CD4-positive, alpha-beta memory T cell (primary cell): ENCODE measurements at regions of chr10 and their contacts with region 1.

Region 1: GRCh38 chr10:31031558-31032257 is at the start of gene ZNF438:
- DNase-seq: peak in 4 of 5 donors; percentile 96 to 98 (median 96)
- H3K4me3 ChIP-seq: peak within 1 kb of the TSS; percentile 77 to 96
- H3K4me3 Mint-ChIP-seq: peak within 1 kb of the TSS; percentile 86 to 93 (median 90)
- H3K27ac ChIP-seq: peak within 1 kb of the TSS; percentile 92
- H3K27ac Mint-ChIP-seq: peak within 1 kb of the TSS; percentile 98 to 99 (median 99)
- H3K4me1 ChIP-seq: peaks cover 13% of the 10 kb centered on the region
- H3K4me1 Mint-ChIP-seq: peaks cover 9 to 25% (median 15%) of the 10 kb centered on the region in 4 donors
- H3K27me3 ChIP-seq: no peaks in the 10 kb centered on the region
- H3K27me3 Mint-ChIP-seq: no peaks in the 10 kb centered on the region
- total RNA-seq, gene ZNF438: 3.7 to 4.1 TPM

Region 2: GRCh38 chr10:30433730-30434272 is 597.9 kb before region 1 on chr10 and contains the start of gene MAP3K8:
- CTCF ChIA-PET with region 1: no interaction called
- POLR2A ChIA-PET with region 1: no interaction called
- intact Hi-C with region 1: loop called (anchors 10 kb)
- DNase-seq: peak; percentile 75 to 89 (median 79)
- H3K4me3 ChIP-seq: peak within 1 kb of the TSS; percentile 55 to 75
- H3K4me3 Mint-ChIP-seq: peak within 1 kb of the TSS; percentile 83 to 94 (median 92)
- H3K27ac ChIP-seq: peak within 1 kb of the TSS; percentile 88
- H3K27ac Mint-ChIP-seq: peak within 1 kb of the TSS; percentile 70 to 94 (median 91)
- H3K4me1 ChIP-seq: peaks cover 51% of the 10 kb centered on the region
- H3K4me1 Mint-ChIP-seq: peaks cover 37 to 55% (median 45%) of the 10 kb centered on the region in 4 donors
- H3K27me3 ChIP-seq: no peaks in the 10 kb centered on the region
- H3K27me3 Mint-ChIP-seq: no peaks in the 10 kb centered on the region
- total RNA-seq, gene MAP3K8: 5.5 to 6.5 TPM

Region 3: GRCh38 chr10:30701451-30702173 is 330.1 kb before region 1 on chr10:
- CTCF ChIA-PET with region 1: no interaction called
- POLR2A ChIA-PET with region 1: interaction called, 3 read pairs
- intact Hi-C with region 1: loop called (anchors 10 kb)
- DNase-seq: peak; percentile 75 to 88 (median 78)
- H3K4me3 ChIP-seq: peak overlapping the region in 1 of 2 donors; percentile 28
- H3K4me3 Mint-ChIP-seq: peak overlapping the region; percentile 78 to 88 (median 84)
- H3K27ac ChIP-seq: peak overlapping the region; percentile 59
- H3K27ac Mint-ChIP-seq: peak overlapping the region; percentile 90 to 98 (median 95)
- H3K4me1 ChIP-seq: peaks cover 89% of the 10 kb centered on the region
- H3K4me1 Mint-ChIP-seq: peaks cover 53 to 90% (median 77%) of the 10 kb centered on the region in 4 donors
- H3K27me3 ChIP-seq: no peaks in the 10 kb centered on the region
- H3K27me3 Mint-ChIP-seq: no peaks in the 10 kb centered on the region

Region 4: DNA sequence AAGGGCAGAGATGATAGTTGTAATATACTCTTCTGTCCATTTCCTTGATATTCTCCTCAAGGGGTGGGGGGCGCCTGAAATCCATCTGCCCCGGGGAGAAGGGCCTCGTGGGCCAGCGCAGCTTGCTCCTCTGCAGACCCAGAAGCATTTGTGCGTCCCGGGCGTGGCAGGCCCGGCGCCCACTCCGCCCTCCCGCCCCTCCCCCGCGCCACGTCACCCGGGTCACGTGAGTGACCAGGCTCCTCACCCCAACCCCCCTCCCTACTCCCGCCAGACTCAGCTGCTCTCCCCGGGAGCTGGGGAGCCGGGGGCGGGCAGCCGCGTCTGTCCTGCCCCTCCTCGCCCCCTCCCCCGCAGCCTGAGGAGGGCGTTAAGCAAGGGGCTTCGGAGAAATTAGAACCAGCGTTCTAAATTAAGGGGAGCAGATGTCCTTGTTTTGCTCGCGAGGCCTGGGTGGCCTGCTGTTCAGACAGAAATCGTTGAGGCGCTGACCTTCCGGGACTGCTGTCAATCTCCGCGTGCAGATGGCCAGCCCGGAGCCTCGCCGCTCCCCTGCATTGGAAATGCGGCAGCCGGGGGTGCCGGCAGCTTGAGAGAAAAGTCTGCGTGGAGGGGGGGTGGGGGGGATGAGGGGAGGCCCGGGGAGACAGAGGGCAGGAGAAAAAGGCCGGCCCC is 102.1 kb after region 1 on chr10:
- CTCF ChIA-PET with region 1: interaction called, 3 read pairs
- POLR2A ChIA-PET with region 1: interaction called, 7 read pairs
- intact Hi-C with region 1: loop called (anchors 1 kb)
- DNase-seq: peak; percentile 37 to 60 (median 47)
- H3K4me3 ChIP-seq: peak overlapping the region in 1 of 2 donors; percentile 59
- H3K4me3 Mint-ChIP-seq: peak overlapping the region; percentile 61 to 85 (median 79)
- H3K27ac ChIP-seq: peak overlapping the region; percentile 45
- H3K27ac Mint-ChIP-seq: peak overlapping the region in 6 of 7 donors; percentile 17 to 72 (median 44)
- H3K4me1 ChIP-seq: peaks cover 37% of the 10 kb centered on the region
- H3K4me1 Mint-ChIP-seq: peaks cover 23 to 51% (median 35%) of the 10 kb centered on the region in 4 donors
- H3K27me3 ChIP-seq: no peaks in the 10 kb centered on the region
- H3K27me3 Mint-ChIP-seq: no peaks in the 10 kb centered on the region

Region 5: DNA sequence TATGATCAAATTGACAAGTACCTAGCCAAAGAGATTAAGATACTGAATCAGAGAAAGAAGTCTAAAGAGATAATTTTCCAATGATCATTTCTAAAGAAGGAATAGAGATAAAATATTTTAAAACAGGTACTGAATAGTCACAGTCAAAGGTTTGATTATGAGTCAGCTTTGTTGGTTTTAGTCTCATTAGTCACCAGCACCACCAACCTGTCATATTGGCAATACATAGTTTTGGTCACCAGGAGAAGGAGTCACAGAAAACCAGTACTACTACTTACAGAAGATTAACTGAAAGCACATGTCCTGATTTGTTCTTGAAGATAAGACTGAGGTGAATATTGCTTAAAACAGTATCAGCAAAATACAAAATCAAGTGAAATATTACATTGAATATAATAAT is 321.9 kb after region 1 on chr10:
- CTCF ChIA-PET with region 1: interaction called, 7 read pairs
- POLR2A ChIA-PET with region 1: interaction called, 4 read pairs
- intact Hi-C with region 1: loop called (anchors 1 kb)
- DNase-seq: peak; percentile 14 to 40 (median 21)
- H3K4me3 ChIP-seq: no peak overlapping the region
- H3K4me3 Mint-ChIP-seq: no peak overlapping the region
- H3K27ac ChIP-seq: no peak overlapping the region
- H3K27ac Mint-ChIP-seq: peak overlapping the region in 2 of 7 donors; percentile 2 to 30
- H3K4me1 ChIP-seq: peaks cover 37% of the 10 kb centered on the region
- H3K4me1 Mint-ChIP-seq: peaks cover 39 to 67% (median 51%) of the 10 kb centered on the region in 4 donors
- H3K27me3 ChIP-seq: no peaks in the 10 kb centered on the region
- H3K27me3 Mint-ChIP-seq: no peaks in the 10 kb centered on the region

Region 6: GRCh38 chr10:31808258-31809218 is 776.8 kb after region 1 on chr10:
- CTCF ChIA-PET with region 1: interaction called, 3 read pairs
- POLR2A ChIA-PET with region 1: no interaction called
- intact Hi-C with region 1: loop called (anchors 1 kb)
- DNase-seq: peak in 4 of 5 donors; percentile 44 to 50 (median 48)
- H3K4me3 ChIP-seq: no peak overlapping the region
- H3K4me3 Mint-ChIP-seq: peak overlapping the region in 4 of 8 donors; percentile 26 to 71 (median 56)
- H3K27ac ChIP-seq: no peak overlapping the region
- H3K27ac Mint-ChIP-seq: peak overlapping the region in 5 of 7 donors; percentile 71 to 94 (median 88)
- H3K4me1 ChIP-seq: peaks cover 4% of the 10 kb centered on the region
- H3K4me1 Mint-ChIP-seq: peaks cover 3 to 7% (median 4%) of the 10 kb centered on the region in 4 donors
- H3K27me3 ChIP-seq: no peaks in the 10 kb centered on the region
- H3K27me3 Mint-ChIP-seq: no peaks in the 10 kb centered on the region